ENCODE measurements at regions of chr18 and their contacts with region 1.

Region 1: GRCh38 chr18:12726774-12727550 is 24.1 kb downstream of the PSMG2 start:
- DNase-seq: peak; percentile 81
- H3K4me3 ChIP-seq: no peak overlapping the region
- H3K27ac ChIP-seq: no peak overlapping the region
- H3K4me1 ChIP-seq: no peaks in the 10 kb centered on the region
- H3K27me3 ChIP-seq: no peaks in the 10 kb centered on the region
- CTCF ChIP-seq: peak; percentile 76 to 80
- POLR2A ChIP-seq: no peak

Region 2: GRCh38 chr18:12890506-12890905 is 163.5 kb after region 1 on chr18:
- CTCF ChIA-PET with region 1: interaction called, 11 read pairs
- POLR2A ChIA-PET with region 1: no interaction called
- dilution Hi-C with region 1: no loop called
- intact Hi-C with region 1: loop called (anchors 1 kb)
- DNase-seq: no peak
- H3K4me3 ChIP-seq: no peak overlapping the region
- H3K27ac ChIP-seq: no peak overlapping the region
- H3K4me1 ChIP-seq: no peaks in the 10 kb centered on the region
- H3K27me3 ChIP-seq: peaks cover 7 to 16% of the 10 kb centered on the region in 2 experiments
- CTCF ChIP-seq: peak in 1 of 2 donors; percentile 13
- POLR2A ChIP-seq: no peak

Region 3: GRCh38 chr18:13101659-13102197 is 374.8 kb after region 1 on chr18:
- CTCF ChIA-PET with region 1: no interaction called
- POLR2A ChIA-PET with region 1: no interaction called
- dilution Hi-C with region 1: no loop called
- intact Hi-C with region 1: no loop called
- DNase-seq: no peak
- H3K4me3 ChIP-seq: no peak overlapping the region
- H3K27ac ChIP-seq: no peak overlapping the region
- H3K4me1 ChIP-seq: no peaks in the 10 kb centered on the region
- H3K27me3 ChIP-seq: no peaks in the 10 kb centered on the region
- CTCF ChIP-seq: no peak
- POLR2A ChIP-seq: no peak

Measured in endothelial cell of umbilical vein (primary cell).